Activated CD4-positive, alpha-beta T cell treated with anti-CD3 and anti-CD28 coated beads for 36 hours (primary cell): ENCODE measurements at regions of chr16 and their contacts with region 1.

Region 1: GRCh38 chr16:11797166-11797956 is at the start of gene ZC3H7A:
- DNase-seq: peak; percentile 97
- ATAC-seq: peak; percentile 95
- H3K4me3 Mint-ChIP-seq: peak within 1 kb of the TSS; percentile 92
- H3K27ac Mint-ChIP-seq: peak within 1 kb of the TSS; percentile 94
- H3K4me1 Mint-ChIP-seq: peaks cover 68% of the 10 kb centered on the region
- H3K27me3 Mint-ChIP-seq: no peaks in the 10 kb centered on the region
- total RNA-seq, gene ZC3H7A: 74.1 to 95.1 TPM

Region 2: DNA sequence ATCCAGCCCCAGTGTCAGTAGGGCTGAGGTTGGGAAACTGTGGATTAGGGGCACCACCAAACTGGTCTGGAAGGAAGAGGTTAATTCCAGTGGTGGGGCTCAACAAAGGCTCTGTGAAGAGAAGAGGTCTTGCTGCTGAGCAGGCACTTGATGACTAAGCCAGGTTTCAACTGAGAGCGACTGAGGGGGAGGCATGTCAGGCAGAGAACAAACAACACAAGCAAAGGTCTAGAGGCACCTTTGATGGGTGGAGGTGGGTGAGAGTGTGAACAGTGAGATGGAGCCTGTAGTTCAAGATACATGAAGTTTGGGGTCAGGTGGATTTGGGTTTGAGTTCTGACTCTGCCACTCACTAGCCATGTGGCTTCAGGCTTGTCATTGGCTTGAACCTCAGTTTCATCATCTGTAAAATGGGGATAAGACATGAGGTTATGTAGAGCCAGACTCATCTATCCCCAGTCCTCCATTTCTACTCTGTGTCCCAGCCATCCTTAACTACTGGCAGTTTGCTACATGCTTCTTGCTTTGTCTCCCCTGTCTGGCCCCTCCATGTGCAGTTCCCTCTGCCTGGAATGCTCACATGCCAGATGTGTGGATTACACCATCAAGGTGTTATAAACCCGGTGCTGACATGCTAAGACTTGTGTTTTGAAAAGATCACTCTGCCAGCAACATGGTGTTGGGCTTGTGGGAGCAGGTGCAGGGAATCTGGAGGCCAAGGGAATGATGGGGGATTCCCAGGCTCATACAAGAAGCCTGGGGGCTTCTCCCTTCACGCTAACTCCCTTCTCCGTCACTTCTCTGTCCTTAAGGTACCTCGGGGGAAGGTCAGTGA is 455.1 kb before region 1 on chr16:
- CTCF ChIA-PET with region 1: no interaction called
- POLR2A ChIA-PET with region 1: no interaction called
- intact Hi-C with region 1: no loop called
- DNase-seq: peak; percentile 69
- ATAC-seq: peak; percentile 64
- H3K4me3 Mint-ChIP-seq: no peak overlapping the region
- H3K27ac Mint-ChIP-seq: peak overlapping the region; percentile 12
- H3K4me1 Mint-ChIP-seq: peaks cover 29% of the 10 kb centered on the region
- H3K27me3 Mint-ChIP-seq: no peaks in the 10 kb centered on the region

Region 3: DNA sequence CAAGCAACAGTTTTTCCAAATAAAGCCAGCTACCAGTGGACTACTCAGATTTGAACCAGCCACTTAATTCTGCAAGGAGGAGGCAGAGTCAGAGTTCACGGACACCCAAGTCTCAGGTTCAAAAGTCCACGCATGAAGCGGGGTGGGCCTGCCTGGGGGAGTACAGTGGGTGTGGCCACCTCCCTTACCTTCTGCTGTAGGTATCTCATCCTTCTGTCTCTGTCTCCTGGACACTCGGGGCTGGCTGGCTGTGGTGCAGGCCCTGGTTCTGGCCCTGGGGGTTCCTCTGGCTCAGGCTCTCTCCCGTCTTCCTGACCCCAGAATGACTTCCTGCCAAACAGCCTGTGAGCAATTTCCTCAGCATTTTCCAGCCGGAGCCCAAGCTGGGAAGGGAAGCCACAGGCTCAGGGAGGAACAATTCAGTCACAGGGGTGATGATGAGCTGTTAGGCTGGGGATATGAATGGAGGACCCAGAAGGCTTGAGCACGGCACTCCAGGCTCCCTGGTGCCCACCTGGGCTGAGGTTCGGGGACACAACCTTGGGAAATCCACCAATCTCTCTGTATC is 312.6 kb before region 1 on chr16:
- CTCF ChIA-PET with region 1: no interaction called
- POLR2A ChIA-PET with region 1: no interaction called
- intact Hi-C with region 1: no loop called
- DNase-seq: no peak
- ATAC-seq: no peak
- H3K4me3 Mint-ChIP-seq: no peak overlapping the region
- H3K27ac Mint-ChIP-seq: no peak overlapping the region
- H3K4me1 Mint-ChIP-seq: no peaks in the 10 kb centered on the region
- H3K27me3 Mint-ChIP-seq: no peaks in the 10 kb centered on the region

Region 4: DNA sequence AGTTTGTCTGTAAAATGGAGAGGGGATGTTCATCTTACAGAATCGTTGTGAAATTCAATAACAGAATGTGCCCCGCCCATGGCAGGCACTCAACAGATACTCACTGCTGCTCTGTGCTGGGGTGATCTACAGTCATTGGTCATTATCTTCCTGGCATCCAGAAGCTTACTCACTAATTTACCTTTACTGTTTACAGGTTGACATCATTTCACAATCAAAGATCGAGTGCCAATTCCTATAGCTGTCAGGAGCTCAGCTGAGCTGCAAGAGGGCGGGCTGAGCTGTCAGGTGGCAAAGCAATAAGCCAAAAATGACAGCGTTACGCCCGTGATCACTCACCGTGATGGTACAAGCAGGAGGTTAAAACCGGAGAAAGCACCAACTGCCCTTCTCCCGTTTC is 261.9 kb before region 1 on chr16:
- CTCF ChIA-PET with region 1: interaction called, 3 read pairs
- POLR2A ChIA-PET with region 1: interaction called, 3 read pairs
- intact Hi-C with region 1: loop called in 1 of 2 experiments (anchors 10 kb)
- DNase-seq: no peak
- ATAC-seq: no peak
- H3K4me3 Mint-ChIP-seq: no peak overlapping the region
- H3K27ac Mint-ChIP-seq: no peak overlapping the region
- H3K4me1 Mint-ChIP-seq: peaks cover 11% of the 10 kb centered on the region
- H3K27me3 Mint-ChIP-seq: no peaks in the 10 kb centered on the region

Region 5: GRCh38 chr16:11667824-11668622 is 129.3 kb before region 1 on chr16 and contains the start of gene SNN:
- CTCF ChIA-PET with region 1: no interaction called
- POLR2A ChIA-PET with region 1: no interaction called
- intact Hi-C with region 1: loop called in 1 of 2 experiments (anchors 1 kb)
- DNase-seq: peak; percentile 93
- ATAC-seq: peak; percentile 90
- H3K4me3 Mint-ChIP-seq: peak within 1 kb of the TSS; percentile 72
- H3K27ac Mint-ChIP-seq: no peak within 1 kb of the TSS
- H3K4me1 Mint-ChIP-seq: peaks cover 73% of the 10 kb centered on the region
- H3K27me3 Mint-ChIP-seq: no peaks in the 10 kb centered on the region
- total RNA-seq, gene SNN: 6.0 to 7.2 TPM

Region 6: DNA sequence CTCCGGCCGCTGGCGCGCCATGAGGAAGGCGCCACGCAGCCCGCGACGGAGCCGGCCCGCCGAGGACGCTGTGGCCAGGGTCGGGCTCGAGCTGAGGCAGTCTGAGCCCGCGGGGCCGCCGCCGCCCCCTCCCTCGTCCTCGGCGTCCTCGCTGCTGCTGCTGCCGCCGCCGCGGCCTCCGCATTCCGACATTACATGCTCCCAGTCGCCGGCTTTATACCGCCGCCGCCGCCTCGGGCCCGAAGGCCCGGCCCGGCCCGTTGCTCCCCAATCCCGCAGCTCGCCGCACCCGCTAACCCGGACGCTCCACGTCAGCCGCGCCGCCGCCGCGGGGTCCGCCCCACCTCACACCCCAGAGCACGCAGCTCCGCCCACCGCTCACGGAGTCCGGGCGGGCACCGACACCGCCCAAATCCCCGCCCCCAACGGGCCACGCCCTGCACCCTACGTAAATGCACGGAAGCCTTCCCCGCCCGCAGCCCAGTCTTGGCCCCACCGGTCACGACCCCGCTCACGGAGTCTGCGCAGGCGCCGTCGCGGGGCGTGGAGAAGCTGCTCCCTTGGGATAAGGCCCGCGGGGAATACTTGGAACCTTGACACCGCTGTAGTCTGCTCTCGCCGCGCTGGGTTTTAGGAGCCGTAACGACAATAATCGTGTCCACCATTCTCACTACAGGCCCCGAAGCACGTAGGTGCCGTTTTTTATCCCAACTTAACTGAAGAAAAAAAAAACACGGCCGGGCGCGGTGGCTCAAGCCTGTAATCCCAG is 54.6 kb before region 1 on chr16 and contains the start of gene TXNDC11:
- CTCF ChIA-PET with region 1: interaction called, 20 read pairs
- POLR2A ChIA-PET with region 1: interaction called, 22 read pairs
- intact Hi-C with region 1: loop called (anchors 1 kb)
- DNase-seq: peak; percentile 100
- ATAC-seq: peak; percentile 92
- H3K4me3 Mint-ChIP-seq: peak within 1 kb of the TSS; percentile 88
- H3K27ac Mint-ChIP-seq: peak within 1 kb of the TSS; percentile 96
- H3K4me1 Mint-ChIP-seq: peaks cover 50% of the 10 kb centered on the region
- H3K27me3 Mint-ChIP-seq: no peaks in the 10 kb centered on the region
- total RNA-seq, gene TXNDC11: 27.3 to 28.3 TPM

Region 7: GRCh38 chr16:11783319-11784037 is 13.9 kb before region 1 on chr16:
- CTCF ChIA-PET with region 1: interaction called, 28 read pairs
- POLR2A ChIA-PET with region 1: interaction called, 9 read pairs
- intact Hi-C with region 1: loop called (anchors 1 kb)
- DNase-seq: peak; percentile 65
- ATAC-seq: peak; percentile 80
- H3K4me3 Mint-ChIP-seq: peak overlapping the region; percentile 74
- H3K27ac Mint-ChIP-seq: peak overlapping the region; percentile 97
- H3K4me1 Mint-ChIP-seq: peaks cover 74% of the 10 kb centered on the region
- H3K27me3 Mint-ChIP-seq: no peaks in the 10 kb centered on the region

Region 8: GRCh38 chr16:11915644-11916523 is 118.5 kb after region 1 on chr16 and contains the start of gene GSPT1:
- CTCF ChIA-PET with region 1: interaction called, 5 read pairs
- POLR2A ChIA-PET with region 1: interaction called, 3 read pairs
- intact Hi-C with region 1: loop called in 1 of 2 experiments (anchors 1 kb)
- DNase-seq: peak; percentile 100
- ATAC-seq: peak; percentile 89
- H3K4me3 Mint-ChIP-seq: peak within 1 kb of the TSS; percentile 89
- H3K27ac Mint-ChIP-seq: peak within 1 kb of the TSS; percentile 96
- H3K4me1 Mint-ChIP-seq: peaks cover 32% of the 10 kb centered on the region
- H3K27me3 Mint-ChIP-seq: no peaks in the 10 kb centered on the region
- total RNA-seq, gene GSPT1: 234 to 260 TPM

Region 9: GRCh38 chr16:12613131-12613991 is 816.0 kb after region 1 on chr16:
- CTCF ChIA-PET with region 1: no interaction called
- POLR2A ChIA-PET with region 1: no interaction called
- intact Hi-C with region 1: loop called in 1 of 2 experiments (anchors 10 kb)
- DNase-seq: peak; percentile 83
- ATAC-seq: peak; percentile 86
- H3K4me3 Mint-ChIP-seq: peak overlapping the region; percentile 49
- H3K27ac Mint-ChIP-seq: peak overlapping the region; percentile 89
- H3K4me1 Mint-ChIP-seq: peaks cover 50% of the 10 kb centered on the region
- H3K27me3 Mint-ChIP-seq: no peaks in the 10 kb centered on the region